ENCODE measurements at regions of chr18 and their contacts with region 1.

Region 1: GRCh38 chr18:63969960-63970802 is at the start of gene SERPINB8:
- DNase-seq: peak; percentile 87 to 92
- H3K4me3 ChIP-seq: peak within 1 kb of the TSS; percentile 73
- H3K27ac ChIP-seq: peak within 1 kb of the TSS; percentile 97
- H3K4me1 ChIP-seq: peaks cover 18% of the 10 kb centered on the region
- H3K27me3 ChIP-seq: no peaks in the 10 kb centered on the region
- CTCF ChIP-seq: no peak
- total RNA-seq, gene SERPINB8: 5.1 and 7.2 TPM in 2 replicates

Region 2: GRCh38 chr18:63367053-63367953 is 602.9 kb before region 1 on chr18 and contains the start of gene KDSR:
- CTCF ChIA-PET with region 1: no interaction called
- POLR2A ChIA-PET with region 1: interaction called, 12 read pairs
- intact Hi-C with region 1: no loop called
- DNase-seq: peak; percentile 94 to 95
- H3K4me3 ChIP-seq: peak within 1 kb of the TSS; percentile 99
- H3K27ac ChIP-seq: peak within 1 kb of the TSS; percentile 71
- H3K4me1 ChIP-seq: peaks cover 20% of the 10 kb centered on the region
- H3K27me3 ChIP-seq: no peaks in the 10 kb centered on the region
- CTCF ChIP-seq: no peak
- total RNA-seq, gene KDSR: 33.8 and 41.7 TPM in 2 replicates

Region 3: DNA sequence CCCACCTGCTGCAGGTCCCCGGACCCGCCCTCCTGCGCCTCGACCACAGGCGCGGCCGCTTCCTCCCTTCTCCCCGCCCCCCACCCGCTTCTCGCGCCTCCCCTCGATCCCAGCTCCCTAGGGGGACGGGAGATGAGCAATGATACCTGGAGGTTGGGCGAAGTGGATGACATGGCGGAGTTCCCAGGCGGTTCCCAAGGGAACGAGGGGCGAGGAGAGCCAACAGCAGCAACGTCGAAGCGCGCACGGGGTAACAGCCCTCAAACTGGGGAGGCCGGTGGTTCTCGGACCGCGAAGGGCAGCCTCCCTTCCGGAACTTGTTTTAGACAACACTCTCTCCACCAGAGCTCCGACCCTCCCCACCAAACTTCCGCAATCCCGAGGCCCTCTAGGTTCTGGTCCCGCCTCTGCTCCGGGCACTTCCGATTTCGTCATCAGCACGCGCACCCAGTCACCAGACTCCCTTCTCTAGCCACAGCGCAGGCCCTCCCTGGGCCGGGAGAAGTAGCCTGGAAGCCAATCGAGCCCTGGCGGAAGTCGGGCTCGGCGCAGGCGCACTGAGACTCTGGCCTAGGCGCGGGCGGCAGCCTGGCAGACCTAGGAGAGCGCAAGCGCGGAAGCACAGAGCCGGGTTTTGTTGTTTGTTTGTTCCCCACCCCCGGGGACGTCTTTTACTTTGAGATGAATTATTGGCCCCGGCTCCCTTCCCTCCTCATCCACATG is 547.9 kb before region 1 on chr18 and contains the start of gene VPS4B:
- CTCF ChIA-PET with region 1: no interaction called
- POLR2A ChIA-PET with region 1: interaction called, 3 read pairs
- intact Hi-C with region 1: loop called (anchors 10 kb)
- DNase-seq: peak; percentile 96 to 97
- H3K4me3 ChIP-seq: peak within 1 kb of the TSS; percentile 73
- H3K27ac ChIP-seq: peak within 1 kb of the TSS; percentile 88
- H3K4me1 ChIP-seq: peaks cover 26% of the 10 kb centered on the region
- H3K27me3 ChIP-seq: no peaks in the 10 kb centered on the region
- CTCF ChIP-seq: no peak
- total RNA-seq, gene VPS4B: 52.4 and 59.7 TPM in 2 replicates

Region 4: DNA sequence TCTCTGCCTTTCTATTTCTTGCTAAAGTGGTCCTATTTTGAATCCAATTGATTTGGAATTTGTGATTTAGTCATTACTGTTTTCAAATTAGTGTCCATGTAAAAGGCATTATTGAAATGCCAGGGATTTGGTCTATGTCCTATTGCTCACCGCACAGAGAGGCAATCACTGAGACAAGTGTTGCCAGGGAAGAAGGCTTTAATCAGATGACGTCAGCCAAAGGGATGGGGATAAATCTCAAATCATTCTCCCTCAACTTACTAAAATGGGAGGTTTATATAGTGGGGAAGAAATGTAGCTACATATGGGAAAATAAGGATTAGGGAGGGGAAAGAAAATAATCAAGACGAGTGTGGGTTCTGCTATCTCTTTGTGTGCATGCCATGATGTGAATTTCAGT is 418.4 kb before region 1 on chr18:
- CTCF ChIA-PET with region 1: no interaction called
- POLR2A ChIA-PET with region 1: interaction called, 11 read pairs
- intact Hi-C with region 1: no loop called
- DNase-seq: no peak
- H3K4me3 ChIP-seq: no peak overlapping the region
- H3K27ac ChIP-seq: no peak overlapping the region
- H3K4me1 ChIP-seq: peaks cover 20% of the 10 kb centered on the region
- H3K27me3 ChIP-seq: no peaks in the 10 kb centered on the region
- CTCF ChIP-seq: no peak

Region 5: DNA sequence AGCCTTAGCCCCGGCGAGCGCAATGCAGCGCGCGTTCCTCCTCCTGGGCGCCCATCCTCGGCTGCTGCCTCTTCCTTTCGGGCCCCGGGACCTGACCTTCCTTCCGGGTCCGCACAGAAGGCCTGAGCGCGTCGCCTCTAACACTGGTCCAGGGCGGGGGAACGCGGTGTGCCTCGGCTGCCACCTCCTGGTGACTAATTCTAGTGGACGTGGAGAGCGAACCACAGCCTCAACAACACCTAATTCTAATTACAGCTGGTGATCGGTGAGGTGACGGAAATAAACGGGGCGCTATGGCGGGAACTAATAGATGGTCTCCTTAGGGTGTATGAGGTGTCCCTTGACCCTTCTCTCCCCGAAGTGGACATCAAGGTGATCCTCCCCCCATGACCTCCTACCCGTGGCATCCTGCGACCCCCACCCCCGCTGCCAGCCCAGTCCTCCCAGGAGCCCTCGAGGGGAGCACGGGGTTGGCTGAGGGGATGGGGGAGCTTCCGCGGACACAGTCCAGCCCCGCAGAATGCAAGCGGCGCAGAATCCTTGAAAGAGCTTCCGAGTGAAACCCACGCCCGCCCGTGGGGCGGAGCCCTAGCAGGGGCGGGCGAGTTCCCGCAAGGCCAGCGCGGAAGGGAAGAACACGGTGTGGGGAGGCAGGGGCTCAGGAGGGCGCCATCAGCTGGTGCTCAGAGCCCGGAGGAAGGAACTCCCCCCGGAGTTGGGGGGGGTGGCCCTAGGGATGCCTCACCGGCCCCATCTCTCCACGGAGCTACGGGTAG is 33.8 kb before region 1 on chr18:
- CTCF ChIA-PET with region 1: no interaction called
- POLR2A ChIA-PET with region 1: no interaction called
- intact Hi-C with region 1: no loop called
- DNase-seq: peak; percentile 60 to 72
- H3K4me3 ChIP-seq: peak overlapping the region; percentile 44; the same call in 1 of the 2 replicates
- H3K27ac ChIP-seq: no peak overlapping the region
- H3K4me1 ChIP-seq: no peaks in the 10 kb centered on the region
- H3K27me3 ChIP-seq: no peaks in the 10 kb centered on the region
- CTCF ChIP-seq: peak; percentile 69

Region 6: GRCh38 chr18:64202210-64202836 is 232.1 kb after region 1 on chr18:
- CTCF ChIA-PET with region 1: no interaction called
- POLR2A ChIA-PET with region 1: no interaction called
- intact Hi-C with region 1: no loop called
- DNase-seq: no peak
- H3K4me3 ChIP-seq: no peak overlapping the region
- H3K27ac ChIP-seq: no peak overlapping the region
- H3K4me1 ChIP-seq: peaks cover 9% of the 10 kb centered on the region; the same call in 1 of the 2 replicates
- H3K27me3 ChIP-seq: no peaks in the 10 kb centered on the region
- CTCF ChIP-seq: no peak